Activated CD4-positive, alpha-beta T cell treated with anti-CD3 and anti-CD28 coated beads, Interleukin-2, amount 10 ng/mL, durations not matched to agents 24 days and 14 days (primary cell): ENCODE measurements at regions of chr21 and their contacts with region 1.

Region 1: DNA sequence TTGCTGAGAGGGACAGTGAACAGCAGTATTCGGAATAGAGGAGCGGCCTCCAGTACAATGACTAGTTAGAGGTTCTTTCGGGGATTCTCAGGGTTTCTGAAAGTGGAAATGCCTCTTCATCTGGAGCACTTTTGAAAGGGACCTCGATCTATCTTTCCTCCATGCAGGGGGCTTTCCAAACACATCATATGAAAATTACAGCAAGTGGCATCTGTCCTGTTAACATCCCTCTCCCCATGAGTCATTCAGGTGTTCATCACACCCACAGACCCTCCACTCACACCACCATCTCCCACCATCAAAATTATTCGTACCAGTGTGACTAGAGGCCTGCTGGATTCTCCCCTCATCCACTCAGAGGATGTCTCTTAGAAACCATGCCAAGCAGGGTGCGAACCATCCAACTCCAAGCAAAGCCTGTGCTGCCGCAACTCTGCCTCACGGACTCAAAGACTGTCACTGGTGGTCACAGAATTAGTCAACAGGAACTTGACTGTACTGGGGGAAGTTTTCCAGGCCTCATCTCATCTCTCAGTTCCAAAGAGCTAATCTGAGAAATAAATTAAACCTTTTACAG is 211.1 kb downstream of the MRPL39 start:
- DNase-seq: peak; percentile 84
- H3K4me3 Mint-ChIP-seq: peak overlapping the region; percentile 49
- H3K27ac Mint-ChIP-seq: peak overlapping the region; percentile 86
- H3K4me1 Mint-ChIP-seq: peaks cover 23% of the 10 kb centered on the region
- H3K27me3 Mint-ChIP-seq: peaks cover 2% of the 10 kb centered on the region

Region 2: DNA sequence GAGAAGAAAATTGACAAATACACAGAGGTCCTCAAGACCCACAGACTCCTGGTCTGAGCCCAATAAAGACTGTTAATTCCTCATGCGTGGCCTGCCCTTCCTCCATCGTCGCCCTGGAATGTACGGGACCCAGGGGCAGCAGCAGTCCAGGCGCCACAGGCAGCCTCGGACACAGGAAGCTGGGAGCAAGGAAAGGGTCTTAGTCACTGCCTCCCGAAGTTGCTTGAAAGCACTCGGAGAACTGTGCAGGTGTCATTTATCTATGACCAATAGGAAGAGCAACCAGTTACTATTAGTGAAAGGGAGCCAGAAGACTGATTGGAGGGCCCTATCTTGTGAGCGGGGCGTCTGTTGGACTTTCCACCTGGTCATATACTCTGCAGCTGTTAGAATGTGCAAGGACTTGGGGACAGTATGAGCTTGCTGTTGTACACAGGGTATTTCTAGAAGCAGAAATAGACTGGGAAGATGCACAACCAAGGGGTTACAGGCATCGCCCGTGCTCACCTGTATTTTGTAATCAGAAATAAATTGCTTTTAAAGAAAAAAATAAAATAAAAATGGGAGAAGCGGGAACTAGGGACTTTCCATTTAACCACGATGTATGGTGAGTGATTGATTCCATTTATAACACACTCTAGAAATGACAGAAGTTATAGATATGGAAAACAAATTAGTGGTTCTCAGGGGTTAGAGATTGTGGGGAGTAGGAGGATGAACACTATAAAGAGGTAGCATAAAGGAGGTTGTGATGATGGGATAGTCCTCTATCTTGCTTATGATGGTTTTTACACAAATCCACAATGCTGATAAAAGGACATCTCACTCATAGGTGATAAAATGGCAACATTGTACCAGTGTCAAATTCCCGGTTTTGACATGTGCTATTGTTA is 33.6 kb before region 1 on chr21:
- intact Hi-C with region 1: loop called (anchors 1 kb)
- DNase-seq: no peak
- H3K4me3 Mint-ChIP-seq: no peak overlapping the region
- H3K27ac Mint-ChIP-seq: no peak overlapping the region
- H3K4me1 Mint-ChIP-seq: no peaks in the 10 kb centered on the region
- H3K27me3 Mint-ChIP-seq: no peaks in the 10 kb centered on the region

Region 3: DNA sequence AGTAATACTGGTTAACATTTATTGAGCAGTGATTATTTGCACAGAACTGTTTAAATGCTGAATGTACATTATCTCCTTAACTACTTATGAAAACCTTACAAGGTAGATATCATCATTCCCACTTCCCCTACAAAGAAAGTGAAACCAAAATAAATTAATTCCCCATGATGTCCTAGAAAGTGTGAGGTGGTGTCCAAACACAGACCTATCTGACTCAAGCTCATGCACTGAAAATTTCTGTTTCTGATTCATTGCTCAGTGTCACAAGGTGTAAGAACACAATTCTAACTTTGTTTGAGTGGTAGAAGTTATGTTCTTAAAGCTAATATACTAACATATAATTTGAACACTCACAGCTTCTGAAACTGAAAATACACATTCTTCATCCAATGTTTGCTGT is 32.3 kb after region 1 on chr21:
- intact Hi-C with region 1: loop called (anchors 1 kb)
- DNase-seq: no peak
- H3K4me3 Mint-ChIP-seq: peak overlapping the region; percentile 42
- H3K27ac Mint-ChIP-seq: peak overlapping the region; percentile 57
- H3K4me1 Mint-ChIP-seq: peaks cover 36% of the 10 kb centered on the region
- H3K27me3 Mint-ChIP-seq: no peaks in the 10 kb centered on the region

Region 4: DNA sequence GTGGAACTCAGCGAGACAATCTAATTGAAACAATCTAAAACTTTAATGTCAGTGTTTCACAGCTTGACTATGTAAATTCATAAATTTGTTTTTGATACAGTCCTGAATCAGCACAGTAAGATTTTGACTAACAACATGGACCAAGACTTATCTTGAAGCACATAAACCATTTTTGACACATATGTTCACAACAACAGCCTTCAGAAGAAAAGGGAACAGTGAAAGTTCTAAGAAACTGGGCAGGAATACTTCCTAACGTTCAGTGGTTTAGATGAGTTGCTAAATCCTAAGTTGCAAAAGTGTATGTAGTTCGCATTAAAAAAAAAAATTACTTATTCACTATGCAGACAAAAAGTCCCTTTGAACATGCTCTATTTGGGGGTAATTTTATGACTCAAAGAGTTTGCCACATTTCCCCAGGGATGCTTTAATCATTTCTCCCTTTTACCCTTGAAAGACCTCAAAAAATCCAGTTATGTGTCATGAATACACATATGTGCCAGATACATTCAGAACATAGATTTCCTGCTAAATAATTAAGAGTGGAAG is 90.9 kb after region 1 on chr21:
- intact Hi-C with region 1: loop called (anchors 1 kb)
- DNase-seq: peak; percentile 49
- H3K4me3 Mint-ChIP-seq: peak overlapping the region; percentile 63
- H3K27ac Mint-ChIP-seq: peak overlapping the region; percentile 91
- H3K4me1 Mint-ChIP-seq: peaks cover 52% of the 10 kb centered on the region
- H3K27me3 Mint-ChIP-seq: no peaks in the 10 kb centered on the region

Region 5: GRCh38 chr21:25509862-25510261 is 113.6 kb after region 1 on chr21:
- intact Hi-C with region 1: loop called (anchors 1 kb)
- DNase-seq: no peak
- H3K4me3 Mint-ChIP-seq: peak overlapping the region; percentile 39
- H3K27ac Mint-ChIP-seq: peak overlapping the region; percentile 81
- H3K4me1 Mint-ChIP-seq: peaks cover 46% of the 10 kb centered on the region
- H3K27me3 Mint-ChIP-seq: no peaks in the 10 kb centered on the region